ENCODE measurements at regions of chr19 and their contacts with region 1.

Region 1: GRCh38 chr19:55353803-55354697 is 469 bp downstream of the COX6B2 start:
- DNase-seq: no peak
- H3K4me3 ChIP-seq: peak overlapping the region; percentile 43
- CTCF ChIP-seq: no peak

Region 2: GRCh38 chr19:55305483-55305882 is 48.6 kb before region 1 on chr19:
- in situ Hi-C with region 1: no loop called
- DNase-seq: no peak
- H3K4me3 ChIP-seq: no peak overlapping the region
- CTCF ChIP-seq: no peak

Region 3: DNA sequence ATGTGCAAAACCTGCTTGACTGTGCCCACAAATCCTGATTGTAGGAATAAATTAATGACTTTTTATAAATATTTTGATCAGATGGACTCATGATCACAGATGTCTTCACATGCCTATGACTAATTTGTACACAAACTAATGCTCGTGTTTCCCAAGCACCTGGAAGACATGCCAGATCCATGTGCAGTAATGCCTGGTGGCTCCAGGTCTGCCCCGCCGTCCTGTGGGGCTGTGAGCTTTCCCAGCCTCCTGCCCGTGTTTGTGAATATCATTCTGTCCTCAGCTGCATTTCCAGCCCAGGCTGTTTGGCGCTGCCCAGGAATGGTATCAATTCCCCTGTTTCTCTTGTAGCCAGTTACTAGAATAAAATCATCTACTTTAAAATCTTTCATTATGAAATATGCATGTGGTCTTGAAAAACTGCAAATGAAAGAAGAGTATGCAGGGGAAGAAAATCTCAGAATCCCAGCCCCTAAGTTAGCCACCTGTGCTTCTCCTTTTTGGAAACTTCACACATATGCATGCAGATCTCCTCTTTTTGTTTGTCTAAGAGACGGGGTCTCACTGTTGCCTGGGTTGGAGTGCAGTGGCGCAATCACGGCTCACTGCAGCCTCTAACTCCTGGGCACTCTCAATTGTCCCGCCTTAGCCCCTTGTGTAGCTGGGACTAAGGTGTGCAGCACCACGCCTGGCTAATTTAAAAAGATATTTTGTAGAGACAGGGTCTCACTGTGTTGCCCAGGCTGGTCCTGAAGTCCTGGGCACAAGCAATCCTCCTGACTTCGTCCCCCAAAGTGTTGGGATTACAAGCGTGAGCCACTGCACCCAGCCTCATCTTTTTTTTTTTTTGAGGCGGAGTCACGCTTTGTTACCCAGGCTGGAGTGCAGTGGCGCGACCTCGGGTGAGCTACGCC is 37.9 kb after region 1 on chr19:
- in situ Hi-C with region 1: loop called (anchors 5 kb)
- DNase-seq: no peak
- H3K4me3 ChIP-seq: no peak overlapping the region
- CTCF ChIP-seq: no peak

Region 4: DNA sequence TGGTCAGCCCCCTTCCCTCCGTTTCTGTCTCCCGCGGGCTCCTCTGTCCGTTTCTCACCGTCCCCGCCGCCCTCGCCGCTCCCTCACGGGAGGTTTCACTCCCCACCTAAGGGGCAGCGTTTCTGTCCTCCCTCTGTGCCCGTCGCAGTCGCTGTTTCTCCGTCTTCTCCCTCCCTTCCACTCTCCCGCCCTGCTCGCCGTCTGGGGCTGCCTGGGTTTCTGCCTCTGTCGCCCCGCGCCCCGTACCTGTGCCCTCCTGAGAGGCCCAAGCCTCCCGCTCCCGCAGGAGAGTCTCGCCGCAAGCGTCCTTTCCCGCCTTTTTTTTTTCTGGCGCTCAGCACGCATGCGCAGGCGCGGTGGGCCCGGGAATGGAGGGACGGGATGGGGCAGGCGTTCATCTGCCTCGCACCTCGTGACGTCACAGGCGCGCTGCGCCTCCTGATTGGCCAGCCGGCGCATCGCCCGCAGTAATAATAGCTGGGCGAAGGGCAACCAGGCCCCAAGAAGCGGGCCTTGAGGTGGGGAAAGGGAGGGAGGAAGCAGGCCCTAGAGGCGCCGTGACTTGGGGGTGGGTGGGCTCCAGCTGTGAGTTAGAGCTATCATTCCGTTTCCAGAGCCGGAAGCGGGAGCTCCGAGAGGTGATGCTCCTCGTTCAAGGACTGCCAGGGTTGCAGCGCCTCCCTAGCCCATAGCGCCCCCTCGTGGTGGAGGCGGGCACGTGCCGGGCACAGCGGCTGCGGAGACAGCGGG is 149.6 kb after region 1 on chr19:
- in situ Hi-C with region 1: no loop called
- DNase-seq: peak; percentile 77
- H3K4me3 ChIP-seq: peak overlapping the region; percentile 38
- CTCF ChIP-seq: peak; percentile 94

Region 5: GRCh38 chr19:55599468-55600279 is 245.6 kb after region 1 on chr19 and contains the start of gene FIZ1:
- in situ Hi-C with region 1: loop called (anchors 10 kb)
- DNase-seq: peak; percentile 98
- H3K4me3 ChIP-seq: peak within 1 kb of the TSS; percentile 80
- CTCF ChIP-seq: no peak